ENCODE measurements at regions of chr1 and their contacts with region 1.

Region 1: DNA sequence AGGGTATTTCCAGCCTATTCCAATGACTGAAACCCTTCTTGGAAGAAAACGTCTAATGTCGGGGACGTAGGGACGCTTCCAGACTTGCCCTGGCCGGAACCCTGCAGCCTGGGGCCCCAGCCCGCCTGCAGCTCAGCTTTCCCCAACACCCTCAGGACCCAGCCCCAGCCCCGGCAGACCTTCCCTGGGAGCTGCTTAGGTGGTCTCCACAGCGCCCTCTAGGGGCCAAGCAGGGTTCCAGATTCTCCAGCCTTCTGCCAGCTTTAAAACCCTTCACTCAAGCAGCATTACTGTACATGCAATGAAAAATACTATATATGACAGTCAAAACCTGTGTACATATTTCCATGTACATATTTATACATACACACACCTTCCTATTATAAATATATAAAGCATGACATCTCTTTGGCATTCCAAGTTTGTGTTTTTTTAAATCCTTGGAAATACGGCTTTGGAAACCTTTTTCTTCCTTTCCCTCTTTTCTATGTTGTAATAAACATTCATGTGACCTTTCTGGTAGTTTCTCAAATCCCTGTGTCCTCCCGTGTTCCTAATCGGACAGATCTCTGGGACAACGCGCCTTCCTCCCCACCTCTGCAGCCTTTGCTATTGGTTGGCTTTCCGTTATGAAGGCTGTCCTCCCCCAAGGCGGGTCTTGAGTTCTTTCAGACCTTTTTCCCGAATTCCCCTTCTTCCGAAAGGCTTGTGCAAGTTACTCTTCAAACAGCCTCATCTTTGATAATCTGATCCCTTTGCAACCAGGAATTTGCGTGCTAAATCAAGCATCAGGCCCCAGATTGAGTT is 60.3 kb downstream of the STUM start:
- DNase-seq: peak; percentile 63 to 76
- ATAC-seq: peak; percentile 37 to 77 (median 66)
- H3K4me3 ChIP-seq: no peak overlapping the region
- H3K27ac ChIP-seq: no peak overlapping the region
- H3K4me1 ChIP-seq: no peaks in the 10 kb centered on the region
- H3K27me3 ChIP-seq: no peaks in the 10 kb centered on the region
- CTCF ChIP-seq: peak; percentile 67

Region 2: DNA sequence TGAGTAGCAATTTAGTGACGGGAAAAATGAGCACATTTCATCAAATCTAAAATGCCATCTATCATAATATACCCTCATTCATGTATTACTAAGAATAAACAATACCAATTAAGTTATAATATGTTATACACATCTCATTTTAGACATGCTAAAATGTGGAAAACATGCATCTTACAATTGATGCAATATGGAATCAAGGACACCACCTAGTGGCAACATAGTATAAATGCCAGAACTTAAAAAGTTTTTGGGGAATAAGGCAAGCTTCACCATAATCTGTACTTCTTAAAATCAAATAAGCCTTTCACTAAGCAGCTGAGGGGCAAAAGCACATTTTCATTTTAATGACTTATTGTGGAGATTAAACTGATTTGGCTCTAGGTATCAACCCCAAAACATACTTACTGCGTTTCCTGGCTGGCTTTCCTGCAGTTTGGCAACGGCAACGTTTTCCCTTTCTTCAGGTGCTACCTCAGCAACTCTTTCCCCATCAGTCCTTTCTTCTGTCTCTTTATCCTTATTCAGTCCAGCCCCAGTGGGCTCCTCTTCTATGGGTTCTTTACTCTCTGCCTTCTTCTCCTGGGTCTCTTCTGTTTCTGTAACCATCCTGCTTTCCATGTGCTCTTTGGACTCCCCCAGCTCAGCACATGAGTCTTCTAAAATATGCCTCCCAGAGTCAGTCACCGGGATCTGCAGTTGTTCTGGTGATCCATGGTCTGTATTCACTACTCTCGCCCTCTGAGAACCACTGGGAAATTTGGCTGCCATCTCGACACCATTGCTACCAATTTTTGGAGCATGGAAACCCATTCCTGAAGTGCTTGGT is 621.2 kb before region 1 on chr1:
- intact Hi-C with region 1: no loop called
- DNase-seq: no peak
- ATAC-seq: peak in 2 of 4 donors; percentile 36 to 67
- H3K4me3 ChIP-seq: no peak overlapping the region
- H3K27ac ChIP-seq: peak overlapping the region; percentile 37
- H3K4me1 ChIP-seq: peaks cover 11% of the 10 kb centered on the region
- H3K27me3 ChIP-seq: no peaks in the 10 kb centered on the region
- CTCF ChIP-seq: peak; percentile 75

Region 3: DNA sequence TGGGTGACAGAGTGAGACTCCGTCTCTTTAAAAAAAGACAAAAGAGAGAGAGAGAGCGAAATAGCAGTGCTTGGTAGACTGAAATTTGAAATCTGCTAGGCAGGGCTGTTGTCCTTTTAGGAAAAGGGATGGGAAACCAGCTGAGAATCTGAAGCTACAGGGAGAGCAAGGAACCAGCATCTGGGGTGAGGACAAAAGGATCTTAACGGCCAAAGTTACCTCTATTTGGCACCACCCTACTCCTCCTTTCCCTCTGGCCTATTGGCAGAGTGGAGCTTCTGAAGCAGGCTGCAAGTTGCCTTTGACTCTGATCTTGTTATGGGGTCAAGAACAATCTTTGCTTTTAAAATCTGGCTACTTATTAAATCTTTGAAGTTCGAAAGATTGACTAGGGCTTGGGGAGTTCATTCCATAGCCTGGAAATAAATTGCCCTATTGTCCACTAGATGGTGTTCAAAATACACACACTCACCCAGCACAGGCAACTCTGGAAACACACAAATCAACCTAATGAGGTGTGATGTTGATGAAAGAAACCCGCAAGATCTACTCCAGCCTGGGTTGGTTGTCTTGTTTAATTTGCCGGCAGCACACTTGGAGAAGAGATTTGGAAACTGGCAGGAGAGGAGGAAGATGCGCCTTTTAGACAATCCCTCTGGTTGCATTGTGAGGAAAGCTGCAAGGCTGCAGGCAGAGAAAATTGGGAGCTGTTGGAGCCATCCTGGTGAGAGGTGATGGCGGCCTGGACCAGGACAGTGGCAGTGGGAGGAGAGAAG is 184.5 kb before region 1 on chr1:
- intact Hi-C with region 1: loop called (anchors 2 to 10 kb)
- DNase-seq: no peak
- ATAC-seq: peak; percentile 52 to 69 (median 59)
- H3K4me3 ChIP-seq: no peak overlapping the region
- H3K27ac ChIP-seq: no peak overlapping the region
- H3K4me1 ChIP-seq: peaks cover 3% of the 10 kb centered on the region
- H3K27me3 ChIP-seq: peaks cover 0 to 12% (median 3%) of the 10 kb centered on the region in 3 donors
- CTCF ChIP-seq: peak; percentile 51

Region 4: DNA sequence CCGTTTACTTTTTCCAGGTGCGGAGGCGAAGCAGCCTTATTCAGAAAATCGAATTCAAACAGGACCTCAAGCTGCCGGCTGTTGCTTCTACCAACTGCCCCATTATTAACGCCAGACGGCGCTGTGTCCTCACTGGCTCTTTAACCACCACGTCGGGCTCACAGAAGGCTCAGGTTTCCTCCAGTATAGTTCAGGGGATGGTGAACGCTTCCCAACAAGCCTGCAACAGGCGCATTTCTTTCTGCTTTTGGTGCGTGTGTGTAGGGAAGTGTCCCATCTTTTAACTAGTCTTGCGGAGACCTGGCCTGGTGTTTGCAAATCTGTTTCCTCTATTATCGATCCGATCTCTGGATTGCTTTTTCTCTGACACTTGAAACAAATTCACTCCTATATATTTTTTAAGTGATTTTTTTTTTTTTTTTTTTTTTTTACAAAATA is 61.1 kb before region 1 on chr1:
- intact Hi-C with region 1: loop called in 1 of 2 experiments (anchors 2 kb)
- DNase-seq: peak; percentile 76 to 87
- ATAC-seq: peak; percentile 75 to 90 (median 84)
- H3K4me3 ChIP-seq: peak overlapping the region; percentile 67
- H3K27ac ChIP-seq: no peak overlapping the region
- H3K4me1 ChIP-seq: peaks cover 16% of the 10 kb centered on the region
- H3K27me3 ChIP-seq: peaks cover 0 to 37% (median 5%) of the 10 kb centered on the region in 3 donors
- CTCF ChIP-seq: peak; percentile 85

Region 5: GRCh38 chr1:226634166-226634588 is 25.3 kb after region 1 on chr1:
- intact Hi-C with region 1: no loop called
- DNase-seq: peak; percentile 78 to 92
- ATAC-seq: peak; percentile 83 to 90 (median 86)
- H3K4me3 ChIP-seq: no peak overlapping the region
- H3K27ac ChIP-seq: peak overlapping the region; percentile 30
- H3K4me1 ChIP-seq: peaks cover 20% of the 10 kb centered on the region
- H3K27me3 ChIP-seq: no peaks in the 10 kb centered on the region
- CTCF ChIP-seq: peak; percentile 97

Measured in psoas muscle (tissue), 8 donors.